OCI-LY7 (cell line): ENCODE measurements at regions of chr2 and their contacts with region 1.

Region 1: GRCh38 chr2:201860636-201861066 is 54.3 kb downstream of the CDK15 start:
- DNase-seq: peak; percentile 64
- H3K4me3 ChIP-seq: no peak overlapping the region
- H3K27ac ChIP-seq: no peak overlapping the region
- H3K4me1 ChIP-seq: no peaks in the 10 kb centered on the region
- CTCF ChIP-seq: peak; percentile 87

Region 2: DNA sequence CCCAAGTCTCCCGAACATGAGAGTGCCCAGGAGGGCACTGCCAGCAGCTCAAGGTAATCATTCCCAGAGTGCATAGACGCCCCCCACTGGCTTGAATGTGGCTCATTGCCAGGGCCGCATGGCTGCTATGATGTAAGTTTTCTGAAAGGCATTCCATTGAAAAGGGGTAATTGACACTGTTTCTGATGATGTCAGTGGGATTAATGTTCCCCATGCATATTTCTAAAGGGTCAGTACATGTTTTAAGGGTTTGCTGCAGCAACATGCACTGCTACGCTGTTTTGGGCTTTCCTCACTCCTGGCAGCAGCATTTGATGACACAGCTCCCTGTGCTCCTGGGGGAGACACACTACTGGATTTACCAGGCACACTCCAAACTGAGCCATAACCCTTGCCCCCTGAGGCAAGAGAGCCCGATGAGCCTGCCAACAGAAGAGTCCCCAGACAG is 249.1 kb after region 1 on chr2:
- CTCF ChIA-PET with region 1: no interaction called
- POLR2A ChIA-PET with region 1: no interaction called
- intact Hi-C with region 1: loop called (anchors 1 kb)
- DNase-seq: peak; percentile 15
- H3K4me3 ChIP-seq: no peak overlapping the region
- H3K27ac ChIP-seq: no peak overlapping the region
- H3K4me1 ChIP-seq: no peaks in the 10 kb centered on the region
- CTCF ChIP-seq: peak; percentile 67